Activated T-helper 1 cell treated with anti-CD3 and anti-CD28 coated beads, Interleukin-12 subunit alpha, Interleukin-12 subunit beta, Interleukin-2, Interleukin-4 antibody, amounts not matched to agents 30 ng/mL and 10 ng/mL and 1 ng/mL, durations not matched to agents 14 hours and 24 hours and 36 hours (primary cell): ENCODE measurements at regions of chr4 and their contacts with region 1.

Region 1: DNA sequence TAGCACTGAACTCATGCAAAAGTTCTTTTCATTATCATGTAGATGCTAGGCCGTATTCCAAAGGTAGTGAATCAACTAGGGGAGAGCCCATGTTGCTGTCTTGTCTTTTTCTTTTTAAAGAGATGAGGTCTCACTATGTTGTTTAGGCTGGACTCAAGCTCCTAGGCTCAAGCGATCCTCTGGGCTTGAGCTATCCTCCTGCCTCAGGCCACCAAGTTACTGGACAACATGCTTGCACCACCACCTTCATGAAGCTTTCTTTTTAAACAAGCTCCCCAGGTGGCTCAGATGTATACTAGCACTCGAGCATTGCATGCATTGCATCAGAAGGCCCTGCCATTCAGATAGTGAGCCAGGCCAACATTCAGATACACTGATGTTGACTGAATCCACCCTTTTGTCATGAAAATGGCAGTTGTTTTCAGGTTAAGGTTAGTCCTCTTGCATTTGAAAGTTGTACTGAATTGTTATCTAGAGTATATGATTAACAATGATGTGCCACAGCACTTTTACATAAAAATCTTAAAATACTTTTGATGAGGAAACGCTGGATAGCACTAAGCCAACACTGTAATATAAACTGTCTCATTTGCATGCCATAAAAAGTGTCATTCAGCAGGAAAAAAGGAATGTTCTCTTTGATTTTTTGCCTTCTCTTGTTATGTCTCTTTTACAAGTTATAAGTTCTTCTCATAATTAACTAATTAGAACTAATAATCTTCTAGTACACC is 76.7 kb downstream of the FNIP2 start:
- DNase-seq: no peak
- H3K4me3 Mint-ChIP-seq: no peak overlapping the region
- H3K27ac Mint-ChIP-seq: no peak overlapping the region
- H3K4me1 Mint-ChIP-seq: peaks cover 9% of the 10 kb centered on the region
- H3K27me3 Mint-ChIP-seq: no peaks in the 10 kb centered on the region

Region 2: GRCh38 chr4:158826057-158826456 is 19.4 kb before region 1 on chr4:
- intact Hi-C with region 1: loop called (anchors 2 kb)
- DNase-seq: no peak
- H3K4me3 Mint-ChIP-seq: peak overlapping the region; percentile 69
- H3K27ac Mint-ChIP-seq: peak overlapping the region; percentile 82
- H3K4me1 Mint-ChIP-seq: peaks cover 74% of the 10 kb centered on the region
- H3K27me3 Mint-ChIP-seq: no peaks in the 10 kb centered on the region